BJ (cell line): ENCODE measurements at regions of chr17 and their contacts with region 1.

Region 1: DNA sequence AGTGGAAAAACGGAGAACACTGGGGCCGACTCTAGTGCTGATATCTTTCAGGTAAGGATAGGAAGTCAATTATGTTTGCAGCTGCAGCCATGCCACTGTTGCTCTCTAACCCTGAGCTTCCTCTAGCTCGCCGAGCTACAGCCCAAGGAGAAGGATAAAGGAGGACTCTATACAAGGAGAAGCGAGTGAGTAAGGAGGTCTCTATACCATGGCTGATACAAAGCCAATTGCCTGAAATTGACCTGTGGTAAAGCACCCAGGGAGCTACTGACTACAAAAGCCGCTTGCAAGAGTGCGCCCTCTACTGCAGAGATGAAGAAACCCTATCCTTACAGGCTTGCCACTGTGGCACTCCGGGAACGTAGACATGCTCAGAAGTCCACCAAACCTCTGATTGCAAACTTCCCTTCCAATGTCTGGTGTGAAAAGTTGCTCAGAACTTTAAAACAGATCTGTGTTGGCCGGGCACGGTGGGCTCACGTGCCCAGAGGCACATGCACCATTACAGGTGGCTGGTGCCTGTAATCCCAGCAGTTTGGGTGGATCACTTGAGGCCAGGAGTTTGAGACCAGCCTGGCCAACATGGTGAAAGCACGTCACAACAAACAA is 10.8 kb upstream of the SLC46A1 start:
- DNase-seq: no peak
- H3K4me3 ChIP-seq: no peak overlapping the region
- H3K27me3 ChIP-seq: peaks cover 10% of the 10 kb centered on the region
- CTCF ChIP-seq: peak; percentile 80

Region 2: DNA sequence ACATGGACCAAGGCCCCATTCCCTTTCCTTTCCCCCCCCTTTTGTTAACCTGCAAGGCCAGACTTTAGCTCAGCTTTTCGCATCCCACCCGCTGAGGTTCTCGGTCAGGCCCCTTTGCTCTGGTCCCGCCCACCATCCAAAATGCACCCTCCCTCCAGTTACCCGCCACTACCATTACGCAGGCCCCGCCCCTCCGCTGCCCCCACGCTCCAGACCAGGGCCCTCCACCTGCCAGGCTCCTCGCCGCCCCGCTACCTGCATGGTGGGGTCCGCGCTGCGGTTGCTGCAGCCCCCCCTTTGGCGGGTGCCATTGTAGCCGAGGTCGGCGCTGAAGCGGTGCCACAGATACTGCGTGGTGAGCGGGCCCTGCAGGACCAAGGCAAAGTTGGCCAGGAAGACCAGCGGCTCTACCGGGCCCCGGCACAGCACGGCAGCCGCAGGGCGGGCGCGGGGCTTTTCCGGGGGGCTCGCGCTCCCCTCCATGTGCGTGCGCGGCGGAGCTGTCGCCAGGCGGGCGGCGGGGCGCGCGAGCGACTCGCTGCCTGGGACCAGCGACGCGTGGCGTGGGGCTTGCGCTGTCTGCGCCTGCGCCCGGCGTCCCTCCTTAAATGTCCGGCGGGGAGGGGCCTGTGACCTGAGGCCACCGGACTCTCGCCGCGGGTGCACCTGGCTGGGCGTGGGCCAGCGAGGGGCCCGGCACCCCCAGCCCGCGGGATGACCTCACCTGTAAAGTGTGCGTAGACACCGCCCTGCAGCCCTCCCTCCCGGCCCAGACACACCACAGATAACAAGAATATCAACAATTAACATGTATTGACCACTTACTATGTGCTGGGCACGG is 11.0 kb before region 1 on chr17 and contains the start of gene SLC46A1:
- CTCF ChIA-PET with region 1: interaction called, 16 read pairs
- POLR2A ChIA-PET with region 1: interaction called, 3 read pairs
- DNase-seq: no peak
- H3K4me3 ChIP-seq: peak within 1 kb of the TSS; percentile 77
- H3K27me3 ChIP-seq: no peaks in the 10 kb centered on the region; the same call in 1 of the 2 replicates
- CTCF ChIP-seq: no peak; the same call in 1 of the 2 replicates
- polyA plus RNA-seq, gene SLC46A1: 5.2 and 5.9 TPM in 2 replicates

Region 3: GRCh38 chr17:28446728-28447395 is 30.1 kb after region 1 on chr17:
- CTCF ChIA-PET with region 1: interaction called, 12 read pairs
- POLR2A ChIA-PET with region 1: no interaction called
- DNase-seq: no peak
- H3K4me3 ChIP-seq: no peak overlapping the region
- H3K27me3 ChIP-seq: peaks cover 2% of the 10 kb centered on the region
- CTCF ChIP-seq: no peak